OCI-LY7 (cell line): ENCODE measurements at regions of chr1 and their contacts with region 1.

Region 1: GRCh38 chr1:15526490-15527339 is at the start of gene DNAJC16:
- DNase-seq: peak; percentile 100
- H3K4me3 ChIP-seq: peak within 1 kb of the TSS; percentile 83
- H3K27ac ChIP-seq: peak within 1 kb of the TSS; percentile 62
- H3K4me1 ChIP-seq: peaks cover 22% of the 10 kb centered on the region
- CTCF ChIP-seq: no peak; the same call in 1 of the 2 replicates
- total RNA-seq, gene DNAJC16: 5.8 and 9.1 TPM in 2 replicates

Region 2: DNA sequence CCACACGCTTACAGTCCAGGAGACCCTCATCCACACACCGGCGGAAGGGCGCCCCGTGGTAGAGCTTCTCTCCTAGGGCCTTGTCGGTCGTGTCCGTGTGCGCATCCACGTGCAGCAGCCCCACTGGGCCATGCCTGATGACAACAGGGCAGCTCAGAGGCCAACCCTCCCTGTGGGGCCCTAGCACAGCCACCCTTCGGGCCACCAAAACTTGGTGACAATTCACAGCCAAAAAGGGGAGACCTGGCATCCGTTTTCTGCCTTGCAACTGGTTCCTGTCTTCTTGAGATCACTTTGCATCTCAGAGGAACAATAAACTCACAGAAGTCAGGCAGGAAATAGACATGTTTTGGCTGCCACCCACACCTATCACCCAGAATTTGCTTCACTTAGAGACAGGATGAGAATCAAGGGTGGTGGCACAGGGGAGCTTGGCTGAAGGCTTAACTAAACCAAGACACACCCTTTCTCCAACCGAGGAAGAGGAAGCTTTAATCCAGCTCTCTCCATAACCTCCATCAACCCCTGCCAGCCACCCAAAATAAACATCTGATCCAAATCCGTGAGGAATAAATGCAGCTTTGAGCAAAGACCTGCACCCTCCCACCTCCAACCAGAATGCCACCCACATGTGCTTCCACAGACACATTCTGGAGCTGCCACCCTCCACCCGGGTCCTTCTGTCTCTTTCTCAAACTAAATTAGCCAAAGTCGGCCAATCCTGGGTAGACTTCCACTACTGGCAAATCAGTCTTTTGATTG is 52.4 kb after region 1 on chr1:
- CTCF ChIA-PET with region 1: no interaction called
- POLR2A ChIA-PET with region 1: no interaction called
- intact Hi-C with region 1: loop called (anchors 2 kb)
- DNase-seq: peak; percentile 66
- H3K4me3 ChIP-seq: peak overlapping the region; percentile 3
- H3K27ac ChIP-seq: peak overlapping the region; percentile 68
- H3K4me1 ChIP-seq: peaks cover 26% of the 10 kb centered on the region
- CTCF ChIP-seq: no peak

Region 3: DNA sequence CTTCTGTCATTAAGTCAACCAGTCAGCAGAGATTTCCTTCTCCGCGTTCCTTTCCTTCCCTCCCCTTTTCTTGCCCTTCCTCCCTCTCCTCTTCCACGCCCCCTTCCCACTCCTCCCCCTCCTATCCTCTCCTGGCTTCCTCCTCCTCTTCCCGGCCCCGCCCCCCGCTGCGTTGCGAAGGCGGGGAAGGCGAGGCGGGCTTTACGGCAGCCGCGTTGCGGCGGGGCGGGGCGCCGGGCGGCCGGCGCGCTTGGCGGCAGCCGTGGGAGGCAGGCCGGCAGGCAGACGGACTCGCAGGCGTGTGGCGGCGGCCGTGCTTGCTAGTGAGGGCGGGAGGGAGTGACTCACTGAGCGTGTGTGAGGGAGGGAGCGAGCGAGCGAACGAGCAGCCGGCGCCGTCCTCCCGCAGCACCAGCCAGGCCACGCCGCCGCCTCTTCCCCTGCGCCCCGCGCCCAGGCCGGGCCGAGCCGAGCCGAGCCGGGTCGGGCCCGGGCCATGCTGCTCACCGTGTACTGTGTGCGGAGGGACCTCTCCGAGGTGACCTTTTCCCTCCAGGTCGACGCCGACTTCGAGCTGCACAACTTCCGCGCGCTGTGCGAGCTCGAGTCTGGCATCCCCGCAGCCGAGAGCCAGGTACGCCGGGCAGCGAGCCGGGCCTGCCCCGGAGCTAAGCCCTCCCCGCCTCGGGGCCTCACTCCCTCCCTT is 90.6 kb after region 1 on chr1 and contains the start of gene DDI2:
- CTCF ChIA-PET with region 1: no interaction called
- POLR2A ChIA-PET with region 1: no interaction called
- intact Hi-C with region 1: loop called (anchors 1 kb)
- DNase-seq: peak; percentile 92
- H3K4me3 ChIP-seq: peak within 1 kb of the TSS; percentile 99
- H3K27ac ChIP-seq: peak within 1 kb of the TSS; percentile 71
- H3K4me1 ChIP-seq: peaks cover 28% of the 10 kb centered on the region
- CTCF ChIP-seq: no peak
- total RNA-seq, gene DDI2: 23.5 and 29.6 TPM in 2 replicates

Region 4: GRCh38 chr1:15696956-15697521 is 170.3 kb after region 1 on chr1:
- CTCF ChIA-PET with region 1: no interaction called
- POLR2A ChIA-PET with region 1: interaction called, 3 read pairs
- intact Hi-C with region 1: loop called (anchors 1 kb)
- DNase-seq: peak; percentile 93
- H3K4me3 ChIP-seq: peak overlapping the region; percentile 63
- H3K27ac ChIP-seq: peak overlapping the region; percentile 93
- H3K4me1 ChIP-seq: peaks cover 36% of the 10 kb centered on the region
- CTCF ChIP-seq: no peak